B cell (primary cell): ENCODE measurements at regions of chr14 and their contacts with region 1.

Region 1: GRCh38 chr14:88013750-88014349 is 8.9 kb downstream of the GPR65 start:
- DNase-seq: peak; percentile 72
- ATAC-seq: peak; percentile 86
- H3K4me3 ChIP-seq: no peak overlapping the region
- H3K4me3 Mint-ChIP-seq: no peak overlapping the region
- H3K27ac ChIP-seq: no peak overlapping the region
- H3K27ac Mint-ChIP-seq: no peak overlapping the region
- H3K4me1 ChIP-seq: peaks cover 2 to 13% of the 10 kb centered on the region in 2 donors
- H3K4me1 Mint-ChIP-seq: peaks cover 44% of the 10 kb centered on the region
- H3K27me3 ChIP-seq: no peaks in the 10 kb centered on the region
- H3K27me3 Mint-ChIP-seq: no peaks in the 10 kb centered on the region
- CTCF ChIP-seq: peak; percentile 84

Region 2: GRCh38 chr14:87979689-87980088 is 34.2 kb before region 1 on chr14:
- CTCF ChIA-PET with region 1: no interaction called
- POLR2A ChIA-PET with region 1: no interaction called
- intact Hi-C with region 1: loop called (anchors 5 kb)
- DNase-seq: no peak
- ATAC-seq: no peak
- H3K4me3 ChIP-seq: no peak overlapping the region
- H3K4me3 Mint-ChIP-seq: no peak overlapping the region
- H3K27ac ChIP-seq: no peak overlapping the region
- H3K27ac Mint-ChIP-seq: no peak overlapping the region
- H3K4me1 ChIP-seq: no peaks in the 10 kb centered on the region
- H3K4me1 Mint-ChIP-seq: no peaks in the 10 kb centered on the region
- H3K27me3 ChIP-seq: no peaks in the 10 kb centered on the region
- H3K27me3 Mint-ChIP-seq: no peaks in the 10 kb centered on the region
- CTCF ChIP-seq: no peak

Region 3: GRCh38 chr14:87992718-87993628 is 20.9 kb before region 1 on chr14 and contains the start of gene GALC:
- CTCF ChIA-PET with region 1: interaction called, 14 read pairs
- POLR2A ChIA-PET with region 1: interaction called, 4 read pairs
- intact Hi-C with region 1: no loop called
- DNase-seq: peak; percentile 97
- ATAC-seq: peak; percentile 82
- H3K4me3 ChIP-seq: peak within 1 kb of the TSS; percentile 47 to 74 (median 66)
- H3K4me3 Mint-ChIP-seq: peak within 1 kb of the TSS; percentile 87
- H3K27ac ChIP-seq: peak within 1 kb of the TSS; percentile 95 to 97
- H3K27ac Mint-ChIP-seq: peak within 1 kb of the TSS; percentile 99
- H3K4me1 ChIP-seq: peaks cover 15 to 29% of the 10 kb centered on the region in 2 donors
- H3K4me1 Mint-ChIP-seq: peaks cover 38% of the 10 kb centered on the region
- H3K27me3 ChIP-seq: no peaks in the 10 kb centered on the region
- H3K27me3 Mint-ChIP-seq: no peaks in the 10 kb centered on the region
- CTCF ChIP-seq: no peak
- total RNA-seq, gene GALC: 15.6 and 17.8 TPM in 2 replicates

Region 4: DNA sequence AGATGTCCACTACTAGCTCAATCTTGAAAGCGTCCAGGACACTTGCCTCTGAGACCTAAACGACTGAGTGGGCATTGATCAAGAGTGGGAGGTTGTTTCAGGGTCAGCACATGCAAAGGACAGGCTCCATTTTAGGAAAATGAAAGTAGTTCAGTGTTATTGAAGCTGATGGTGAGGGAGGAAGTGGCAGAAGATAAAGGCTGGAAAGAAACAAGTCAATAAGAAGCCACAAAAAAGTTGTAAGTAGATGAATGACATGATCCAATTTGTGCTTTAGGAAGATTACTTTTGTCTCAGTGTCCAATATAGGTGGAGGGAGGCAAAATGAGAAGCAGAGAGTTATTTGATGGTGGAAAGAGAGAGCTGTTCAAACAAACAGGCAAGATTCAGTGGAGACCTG is 13.0 kb after region 1 on chr14:
- CTCF ChIA-PET with region 1: interaction called, 13 read pairs
- POLR2A ChIA-PET with region 1: no interaction called
- intact Hi-C with region 1: no loop called
- DNase-seq: no peak
- ATAC-seq: no peak
- H3K4me3 ChIP-seq: no peak overlapping the region
- H3K4me3 Mint-ChIP-seq: no peak overlapping the region
- H3K27ac ChIP-seq: no peak overlapping the region
- H3K27ac Mint-ChIP-seq: no peak overlapping the region
- H3K4me1 ChIP-seq: peaks cover 11 to 17% of the 10 kb centered on the region in 2 donors
- H3K4me1 Mint-ChIP-seq: peaks cover 26% of the 10 kb centered on the region
- H3K27me3 ChIP-seq: no peaks in the 10 kb centered on the region
- H3K27me3 Mint-ChIP-seq: no peaks in the 10 kb centered on the region
- CTCF ChIP-seq: no peak

Region 5: GRCh38 chr14:88063845-88064244 is 50.0 kb after region 1 on chr14:
- CTCF ChIA-PET with region 1: no interaction called
- POLR2A ChIA-PET with region 1: no interaction called
- intact Hi-C with region 1: no loop called
- DNase-seq: no peak
- ATAC-seq: no peak
- H3K4me3 ChIP-seq: no peak overlapping the region
- H3K4me3 Mint-ChIP-seq: no peak overlapping the region
- H3K27ac ChIP-seq: no peak overlapping the region
- H3K27ac Mint-ChIP-seq: no peak overlapping the region
- H3K4me1 ChIP-seq: no peaks in the 10 kb centered on the region
- H3K4me1 Mint-ChIP-seq: no peaks in the 10 kb centered on the region
- H3K27me3 ChIP-seq: no peaks in the 10 kb centered on the region
- H3K27me3 Mint-ChIP-seq: no peaks in the 10 kb centered on the region
- CTCF ChIP-seq: no peak

Region 6: GRCh38 chr14:88168498-88169165 is 154.8 kb after region 1 on chr14:
- CTCF ChIA-PET with region 1: interaction called, 42 read pairs
- POLR2A ChIA-PET with region 1: interaction called, 11 read pairs
- intact Hi-C with region 1: loop called (anchors 1 kb)
- DNase-seq: peak; percentile 66
- ATAC-seq: peak; percentile 75
- H3K4me3 ChIP-seq: no peak overlapping the region
- H3K4me3 Mint-ChIP-seq: no peak overlapping the region
- H3K27ac ChIP-seq: no peak overlapping the region
- H3K27ac Mint-ChIP-seq: no peak overlapping the region
- H3K4me1 ChIP-seq: no peaks in the 10 kb centered on the region
- H3K4me1 Mint-ChIP-seq: no peaks in the 10 kb centered on the region
- H3K27me3 ChIP-seq: peaks cover 0 to 21% (median 2%) of the 10 kb centered on the region in 4 experiments
- H3K27me3 Mint-ChIP-seq: peaks cover 42% of the 10 kb centered on the region
- CTCF ChIP-seq: peak; percentile 76

Region 7: DNA sequence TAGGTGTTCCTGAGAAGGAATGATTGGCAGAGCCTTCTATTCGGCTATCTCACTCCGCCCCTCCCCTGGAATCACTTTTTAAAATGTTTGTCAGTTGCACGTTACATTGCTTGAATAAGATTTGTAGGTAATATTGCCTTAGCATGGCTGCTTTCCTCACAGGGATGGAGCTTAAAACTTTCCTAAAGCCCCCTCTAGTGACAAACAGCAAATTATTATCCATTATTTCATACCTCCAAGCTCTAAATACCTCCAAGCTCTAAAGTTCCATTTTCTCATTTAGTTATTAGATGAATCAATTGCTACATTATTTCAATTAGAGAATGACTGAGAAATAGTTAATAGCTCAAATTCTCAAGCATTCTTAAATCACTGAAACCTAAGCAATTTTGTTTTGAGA is 366.6 kb after region 1 on chr14:
- CTCF ChIA-PET with region 1: interaction called, 11 read pairs
- POLR2A ChIA-PET with region 1: no interaction called
- intact Hi-C with region 1: loop called (anchors 10 kb)
- DNase-seq: no peak
- ATAC-seq: no peak
- H3K4me3 ChIP-seq: no peak overlapping the region
- H3K4me3 Mint-ChIP-seq: no peak overlapping the region
- H3K27ac ChIP-seq: no peak overlapping the region
- H3K27ac Mint-ChIP-seq: no peak overlapping the region
- H3K4me1 ChIP-seq: peaks cover 0 to 4% of the 10 kb centered on the region in 2 donors
- H3K4me1 Mint-ChIP-seq: peaks cover 9% of the 10 kb centered on the region
- H3K27me3 ChIP-seq: peaks cover 0 to 4% (median 0%) of the 10 kb centered on the region in 4 experiments
- H3K27me3 Mint-ChIP-seq: peaks cover 13% of the 10 kb centered on the region
- CTCF ChIP-seq: no peak